PC-3 (cell line): ENCODE measurements at regions of chr7 and their contacts with region 1.

Region 1: GRCh38 chr7:104848138-104848990 is 165.6 kb upstream of the KMT2E start:
- DNase-seq: peak; percentile 78
- ATAC-seq: peak; percentile 80
- H3K4me3 ChIP-seq: no peak overlapping the region
- H3K27ac ChIP-seq: no peak overlapping the region
- H3K4me1 ChIP-seq: no peaks in the 10 kb centered on the region
- H3K27me3 ChIP-seq: peaks cover 50% of the 10 kb centered on the region
- CTCF ChIP-seq: peak; percentile 92

Region 2: GRCh38 chr7:104272767-104273384 is 575.5 kb before region 1 on chr7:
- CTCF ChIA-PET with region 1: no interaction called
- POLR2A ChIA-PET with region 1: no interaction called
- intact Hi-C with region 1: loop called (anchors 10 kb)
- DNase-seq: peak; percentile 56
- ATAC-seq: no peak; the same call in 1 of the 2 replicates
- H3K4me3 ChIP-seq: no peak overlapping the region
- H3K27ac ChIP-seq: no peak overlapping the region
- H3K4me1 ChIP-seq: no peaks in the 10 kb centered on the region
- H3K27me3 ChIP-seq: no peaks in the 10 kb centered on the region; the same call in 1 of the 2 replicates
- CTCF ChIP-seq: peak; percentile 75

Region 3: GRCh38 chr7:104643587-104644217 is 204.7 kb before region 1 on chr7:
- CTCF ChIA-PET with region 1: interaction called, 5 read pairs
- POLR2A ChIA-PET with region 1: no interaction called
- intact Hi-C with region 1: loop called (anchors 1 kb)
- DNase-seq: peak; percentile 39
- ATAC-seq: peak; percentile 51
- H3K4me3 ChIP-seq: no peak overlapping the region
- H3K27ac ChIP-seq: no peak overlapping the region
- H3K4me1 ChIP-seq: no peaks in the 10 kb centered on the region
- H3K27me3 ChIP-seq: peaks cover 29% of the 10 kb centered on the region
- CTCF ChIP-seq: peak; percentile 75